Motor neuron (in vitro differentiated cells): ENCODE measurements at regions of chr3 and their contacts with region 1.

Region 1: DNA sequence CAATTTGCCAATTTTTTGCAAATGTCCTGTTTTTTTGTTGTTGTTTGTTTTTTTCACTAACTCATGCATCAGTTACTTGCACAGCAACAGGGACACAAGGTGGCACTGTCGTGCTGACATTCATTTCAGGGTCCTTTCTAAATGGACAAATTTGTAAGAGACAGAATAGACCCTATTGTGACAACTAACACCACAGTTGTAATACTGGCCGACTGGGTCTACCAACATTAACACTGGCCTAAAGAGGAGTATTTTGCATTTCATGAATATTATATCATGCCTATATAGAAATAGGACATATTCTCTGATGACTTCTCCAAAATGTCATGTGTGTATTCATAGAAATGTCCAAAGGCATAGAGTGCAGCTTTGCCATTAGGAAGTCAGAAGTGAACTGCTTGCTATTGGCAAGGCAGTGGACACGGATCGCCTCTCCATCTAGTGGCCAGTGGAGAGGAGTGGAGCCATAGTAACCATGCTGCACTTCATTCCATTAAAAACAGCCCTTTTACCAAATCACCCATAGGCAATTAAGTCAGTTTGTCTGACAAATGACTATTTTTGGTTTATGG is 54.8 kb downstream of the ZBTB20 start:
- ATAC-seq: peak; percentile 98 to 100 (median 100)
- H3K4me3 ChIP-seq: no peak overlapping the region
- H3K27ac ChIP-seq: no peak overlapping the region
- H3K4me1 ChIP-seq: peaks cover 1 to 2% of the 10 kb centered on the region in 2 donors

Region 2: GRCh38 chr3:114383875-114384557 is 708.3 kb before region 1 on chr3:
- in situ Hi-C with region 1: loop called in 1 of 9 experiments (anchors 25 kb)
- ATAC-seq: peak; percentile 83 to 96 (median 92)
- H3K4me3 ChIP-seq: peak overlapping the region in 1 of 5 donors; percentile 3
- H3K27ac ChIP-seq: peak overlapping the region; percentile 56 to 58
- H3K4me1 ChIP-seq: peaks cover 10 to 11% of the 10 kb centered on the region in 2 donors

Region 3: DNA sequence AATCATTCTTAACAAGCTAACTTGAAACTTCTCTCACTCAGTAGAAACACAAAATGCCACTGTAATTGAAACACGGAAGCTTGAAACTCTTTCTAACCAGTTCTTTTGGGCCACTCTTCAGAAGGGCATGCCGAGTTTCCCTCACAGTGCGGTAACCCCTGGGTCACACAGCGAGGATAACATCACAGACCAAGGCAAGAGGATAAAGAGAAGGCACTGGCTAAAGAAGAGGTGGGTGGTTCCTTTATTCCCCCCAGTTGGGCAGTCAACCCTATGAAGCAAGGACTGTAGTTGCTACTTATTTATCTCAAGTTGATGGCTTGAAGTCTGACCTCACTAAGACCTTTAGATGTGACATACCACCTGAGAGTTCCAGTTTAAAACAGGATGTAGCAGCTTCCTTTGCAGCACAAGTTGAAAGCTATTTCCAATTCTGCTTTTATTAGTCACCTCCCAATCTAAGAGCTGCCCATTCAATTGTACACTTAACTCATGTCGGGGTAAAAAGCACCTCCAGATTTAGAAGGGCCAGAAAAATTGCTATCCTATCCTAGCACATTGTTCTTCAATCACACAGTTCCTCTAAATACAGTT is 526.0 kb before region 1 on chr3:
- in situ Hi-C with region 1: no loop called
- ATAC-seq: no peak
- H3K4me3 ChIP-seq: no peak overlapping the region
- H3K27ac ChIP-seq: no peak overlapping the region
- H3K4me1 ChIP-seq: peaks cover 9 to 14% of the 10 kb centered on the region in 2 donors

Region 4: DNA sequence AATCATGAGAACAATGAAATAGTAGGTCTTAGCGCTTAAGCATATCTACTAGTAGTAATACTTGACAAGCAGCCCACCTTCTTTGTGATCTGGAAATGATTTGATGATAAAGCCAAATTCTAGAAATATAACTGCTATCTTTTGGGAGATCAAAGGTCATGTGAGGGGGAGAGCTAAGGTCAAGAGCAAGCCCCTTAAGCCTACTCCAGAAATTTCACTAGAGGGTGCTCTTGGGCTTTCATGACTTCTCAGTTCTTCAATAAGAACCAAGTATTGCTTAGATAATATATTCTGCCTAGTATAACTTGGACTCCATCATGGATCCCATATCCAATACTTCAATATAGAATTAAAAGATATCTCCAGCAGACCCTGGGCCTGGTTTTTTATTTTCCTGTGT is 264.8 kb before region 1 on chr3:
- in situ Hi-C with region 1: loop called in 2 of 9 experiments (anchors 25 kb)
- ATAC-seq: peak in 4 of 8 experiments; percentile 57 to 88 (median 82)
- H3K4me3 ChIP-seq: no peak overlapping the region
- H3K27ac ChIP-seq: no peak overlapping the region
- H3K4me1 ChIP-seq: no peaks in the 10 kb centered on the region

Region 5: GRCh38 chr3:114958930-114959329 is 133.4 kb before region 1 on chr3:
- in situ Hi-C with region 1: no loop called
- ATAC-seq: no peak
- H3K4me3 ChIP-seq: no peak overlapping the region
- H3K27ac ChIP-seq: no peak overlapping the region
- H3K4me1 ChIP-seq: no peaks in the 10 kb centered on the region